ENCODE measurements at regions of chr15 and their contacts with region 1.

Region 1: GRCh38 chr15:76059320-76060117 is at the start of gene TMEM266:
- DNase-seq: peak; percentile 63 to 77 (median 67)
- ATAC-seq: peak; percentile 88
- H3K4me3 ChIP-seq: peak within 1 kb of the TSS; percentile 62 to 74
- H3K27ac ChIP-seq: peak within 1 kb of the TSS in 3 of 4 donors; percentile 7 to 54 (median 37)
- H3K4me1 ChIP-seq: peaks cover 30% of the 10 kb centered on the region
- H3K27me3 ChIP-seq: peaks cover 0 to 3% of the 10 kb centered on the region in 2 donors
- CTCF ChIP-seq: no peak
- POLR2A ChIP-seq: peak in 2 of 3 donors; percentile 36 to 41
- total RNA-seq, gene TMEM266: 0.66 to 9.1 TPM

Region 2: DNA sequence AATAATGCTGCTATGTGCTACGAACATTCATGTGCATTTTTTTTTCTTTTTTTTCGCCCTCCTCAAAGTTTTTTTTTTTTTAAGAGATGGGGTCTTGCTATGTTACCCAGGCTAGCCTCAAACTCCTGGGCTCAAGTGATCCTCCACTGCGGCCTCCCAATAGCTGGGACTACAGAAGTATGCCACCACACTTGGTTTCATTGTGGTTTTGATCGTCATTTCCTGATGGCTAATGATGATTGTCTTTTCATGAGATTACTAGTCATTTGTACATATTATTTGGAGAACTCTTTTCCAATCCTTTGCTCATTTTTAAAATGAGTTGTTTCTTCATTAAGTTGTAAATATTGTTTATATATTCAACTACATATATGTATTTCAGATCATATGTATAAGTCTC is 107.0 kb before region 1 on chr15:
- intact Hi-C with region 1: no loop called
- DNase-seq: no peak
- ATAC-seq: no peak
- H3K4me3 ChIP-seq: no peak overlapping the region
- H3K27ac ChIP-seq: no peak overlapping the region
- H3K4me1 ChIP-seq: peaks cover 6% of the 10 kb centered on the region
- H3K27me3 ChIP-seq: no peaks in the 10 kb centered on the region
- CTCF ChIP-seq: no peak
- POLR2A ChIP-seq: no peak

Region 3: GRCh38 chr15:76139368-76140073 is 80.0 kb after region 1 on chr15:
- intact Hi-C with region 1: loop called (anchors 5 kb)
- DNase-seq: peak; percentile 77 to 89 (median 86)
- ATAC-seq: peak; percentile 91
- H3K4me3 ChIP-seq: no peak overlapping the region
- H3K27ac ChIP-seq: no peak overlapping the region
- H3K4me1 ChIP-seq: peaks cover 12% of the 10 kb centered on the region
- H3K27me3 ChIP-seq: no peaks in the 10 kb centered on the region
- CTCF ChIP-seq: peak; percentile 88 to 95 (median 92)
- POLR2A ChIP-seq: no peak

Region 4: GRCh38 chr15:76235186-76235826 is 175.8 kb after region 1 on chr15:
- intact Hi-C with region 1: no loop called
- DNase-seq: no peak
- ATAC-seq: peak; percentile 35
- H3K4me3 ChIP-seq: no peak overlapping the region
- H3K27ac ChIP-seq: no peak overlapping the region
- H3K4me1 ChIP-seq: no peaks in the 10 kb centered on the region
- H3K27me3 ChIP-seq: no peaks in the 10 kb centered on the region
- CTCF ChIP-seq: peak in 6 of 7 experiments; percentile 29 to 41 (median 37)
- POLR2A ChIP-seq: no peak

Region 5: GRCh38 chr15:77002954-77003912 is 943.7 kb after region 1 on chr15:
- intact Hi-C with region 1: no loop called
- DNase-seq: peak in 1 of 4 donors; percentile 75
- ATAC-seq: no peak
- H3K4me3 ChIP-seq: no peak overlapping the region
- H3K27ac ChIP-seq: peak overlapping the region in 1 of 4 donors; percentile 60
- H3K4me1 ChIP-seq: no peaks in the 10 kb centered on the region
- H3K27me3 ChIP-seq: no peaks in the 10 kb centered on the region
- CTCF ChIP-seq: no peak
- POLR2A ChIP-seq: no peak

Measured in body of pancreas (tissue), 4 donors.